Psoas muscle (tissue), 8 donors: ENCODE measurements at regions of chr3 and their contacts with region 1.

Region 1: GRCh38 chr3:61493339-61493738 is 68.0 kb upstream of the PTPRG start:
- DNase-seq: no peak
- ATAC-seq: peak in 2 of 4 donors; percentile 23 to 33
- H3K4me3 ChIP-seq: no peak overlapping the region
- H3K27ac ChIP-seq: no peak overlapping the region
- H3K4me1 ChIP-seq: peaks cover 12% of the 10 kb centered on the region
- H3K27me3 ChIP-seq: no peaks in the 10 kb centered on the region
- CTCF ChIP-seq: no peak

Region 2: GRCh38 chr3:61409638-61410037 is 83.7 kb before region 1 on chr3:
- intact Hi-C with region 1: no loop called
- DNase-seq: no peak
- ATAC-seq: no peak
- H3K4me3 ChIP-seq: no peak overlapping the region
- H3K27ac ChIP-seq: no peak overlapping the region
- H3K4me1 ChIP-seq: no peaks in the 10 kb centered on the region
- H3K27me3 ChIP-seq: no peaks in the 10 kb centered on the region
- CTCF ChIP-seq: no peak

Region 3: GRCh38 chr3:61448378-61448777 is 45.0 kb before region 1 on chr3:
- intact Hi-C with region 1: loop called in 1 of 2 experiments (anchors 5 kb)
- DNase-seq: no peak
- ATAC-seq: peak; percentile 64 to 94 (median 90)
- H3K4me3 ChIP-seq: no peak overlapping the region
- H3K27ac ChIP-seq: peak overlapping the region; percentile 46
- H3K4me1 ChIP-seq: peaks cover 22% of the 10 kb centered on the region
- H3K27me3 ChIP-seq: no peaks in the 10 kb centered on the region
- CTCF ChIP-seq: no peak

Region 4: GRCh38 chr3:61537366-61537765 is 44.0 kb after region 1 on chr3:
- intact Hi-C with region 1: no loop called
- DNase-seq: no peak
- ATAC-seq: no peak
- H3K4me3 ChIP-seq: no peak overlapping the region
- H3K27ac ChIP-seq: no peak overlapping the region
- H3K4me1 ChIP-seq: no peaks in the 10 kb centered on the region
- H3K27me3 ChIP-seq: no peaks in the 10 kb centered on the region
- CTCF ChIP-seq: no peak